B cell (primary cell): ENCODE measurements at regions of chr2 and their contacts with region 1.

Region 1: GRCh38 chr2:233185963-233186362 is 65.5 kb upstream of the ATG16L1 start:
- DNase-seq: peak; percentile 61
- ATAC-seq: peak; percentile 74
- H3K4me3 ChIP-seq: no peak overlapping the region
- H3K4me3 Mint-ChIP-seq: peak overlapping the region; percentile 13
- H3K27ac ChIP-seq: peak overlapping the region; percentile 9 to 68
- H3K27ac Mint-ChIP-seq: peak overlapping the region; percentile 85
- H3K4me1 ChIP-seq: peaks cover 14 to 20% of the 10 kb centered on the region in 2 donors
- H3K4me1 Mint-ChIP-seq: peaks cover 35% of the 10 kb centered on the region
- H3K27me3 ChIP-seq: no peaks in the 10 kb centered on the region
- H3K27me3 Mint-ChIP-seq: no peaks in the 10 kb centered on the region
- CTCF ChIP-seq: no peak

Region 2: DNA sequence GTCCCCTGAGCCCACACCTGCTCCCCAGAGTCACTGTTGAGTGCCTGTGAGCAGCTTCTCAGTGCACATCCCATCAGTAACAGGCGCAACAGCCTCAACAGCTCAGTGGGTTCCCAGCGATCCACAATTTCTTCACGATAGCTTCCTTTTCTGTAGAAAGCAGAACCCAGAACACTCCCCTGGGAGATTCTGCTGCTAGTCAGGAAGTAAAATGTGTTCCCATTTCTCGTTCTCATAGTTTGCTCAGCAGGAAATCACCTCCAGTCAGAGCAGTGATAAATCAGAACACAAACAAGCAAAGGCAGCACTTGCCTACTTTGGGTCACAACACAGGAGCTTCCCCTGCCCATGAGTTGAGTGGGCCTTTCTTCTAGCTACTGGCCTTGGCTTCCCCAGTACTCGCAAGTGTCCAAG is 16.6 kb after region 1 on chr2:
- CTCF ChIA-PET with region 1: interaction called, 10 read pairs
- POLR2A ChIA-PET with region 1: interaction called, 3 read pairs
- intact Hi-C with region 1: no loop called
- DNase-seq: peak; percentile 63
- ATAC-seq: peak; percentile 68
- H3K4me3 ChIP-seq: no peak overlapping the region
- H3K4me3 Mint-ChIP-seq: peak overlapping the region; percentile 59
- H3K27ac ChIP-seq: peak overlapping the region; percentile 4 to 75
- H3K27ac Mint-ChIP-seq: peak overlapping the region; percentile 86
- H3K4me1 ChIP-seq: peaks cover 18 to 24% of the 10 kb centered on the region in 2 donors
- H3K4me1 Mint-ChIP-seq: peaks cover 38% of the 10 kb centered on the region
- H3K27me3 ChIP-seq: no peaks in the 10 kb centered on the region
- H3K27me3 Mint-ChIP-seq: no peaks in the 10 kb centered on the region
- CTCF ChIP-seq: no peak

Region 3: GRCh38 chr2:233470011-233470687 is 284.2 kb after region 1 on chr2:
- CTCF ChIA-PET with region 1: no interaction called
- POLR2A ChIA-PET with region 1: no interaction called
- intact Hi-C with region 1: no loop called
- DNase-seq: no peak
- ATAC-seq: no peak
- H3K4me3 ChIP-seq: no peak overlapping the region
- H3K4me3 Mint-ChIP-seq: no peak overlapping the region
- H3K27ac ChIP-seq: no peak overlapping the region
- H3K27ac Mint-ChIP-seq: peak overlapping the region; percentile 41
- H3K4me1 ChIP-seq: no peaks in the 10 kb centered on the region
- H3K4me1 Mint-ChIP-seq: no peaks in the 10 kb centered on the region
- H3K27me3 ChIP-seq: no peaks in the 10 kb centered on the region
- H3K27me3 Mint-ChIP-seq: no peaks in the 10 kb centered on the region
- CTCF ChIP-seq: no peak